ENCODE measurements at regions of chr6 and their contacts with region 1.

Region 1: GRCh38 chr6:42402184-42402583 is 49.5 kb downstream of the TRERF1 start:
- DNase-seq: peak; percentile 82
- H3K4me3 Mint-ChIP-seq: peak overlapping the region; percentile 70
- H3K27ac Mint-ChIP-seq: peak overlapping the region; percentile 74
- H3K4me1 Mint-ChIP-seq: peaks cover 63% of the 10 kb centered on the region
- H3K27me3 Mint-ChIP-seq: no peaks in the 10 kb centered on the region
- CTCF ChIP-seq: no peak

Region 2: GRCh38 chr6:42197555-42198362 is 204.4 kb before region 1 on chr6:
- CTCF ChIA-PET with region 1: no interaction called
- POLR2A ChIA-PET with region 1: no interaction called
- intact Hi-C with region 1: no loop called
- DNase-seq: peak; percentile 54
- H3K4me3 Mint-ChIP-seq: no peak overlapping the region
- H3K27ac Mint-ChIP-seq: no peak overlapping the region
- H3K4me1 Mint-ChIP-seq: peaks cover 27% of the 10 kb centered on the region
- H3K27me3 Mint-ChIP-seq: no peaks in the 10 kb centered on the region
- CTCF ChIP-seq: no peak

Region 3: GRCh38 chr6:42210551-42210950 is 191.6 kb before region 1 on chr6:
- CTCF ChIA-PET with region 1: no interaction called
- POLR2A ChIA-PET with region 1: interaction called, 11 read pairs
- intact Hi-C with region 1: no loop called
- DNase-seq: peak; percentile 43
- H3K4me3 Mint-ChIP-seq: no peak overlapping the region
- H3K27ac Mint-ChIP-seq: peak overlapping the region; percentile 63
- H3K4me1 Mint-ChIP-seq: no peaks in the 10 kb centered on the region
- H3K27me3 Mint-ChIP-seq: no peaks in the 10 kb centered on the region
- CTCF ChIP-seq: no peak

Region 4: DNA sequence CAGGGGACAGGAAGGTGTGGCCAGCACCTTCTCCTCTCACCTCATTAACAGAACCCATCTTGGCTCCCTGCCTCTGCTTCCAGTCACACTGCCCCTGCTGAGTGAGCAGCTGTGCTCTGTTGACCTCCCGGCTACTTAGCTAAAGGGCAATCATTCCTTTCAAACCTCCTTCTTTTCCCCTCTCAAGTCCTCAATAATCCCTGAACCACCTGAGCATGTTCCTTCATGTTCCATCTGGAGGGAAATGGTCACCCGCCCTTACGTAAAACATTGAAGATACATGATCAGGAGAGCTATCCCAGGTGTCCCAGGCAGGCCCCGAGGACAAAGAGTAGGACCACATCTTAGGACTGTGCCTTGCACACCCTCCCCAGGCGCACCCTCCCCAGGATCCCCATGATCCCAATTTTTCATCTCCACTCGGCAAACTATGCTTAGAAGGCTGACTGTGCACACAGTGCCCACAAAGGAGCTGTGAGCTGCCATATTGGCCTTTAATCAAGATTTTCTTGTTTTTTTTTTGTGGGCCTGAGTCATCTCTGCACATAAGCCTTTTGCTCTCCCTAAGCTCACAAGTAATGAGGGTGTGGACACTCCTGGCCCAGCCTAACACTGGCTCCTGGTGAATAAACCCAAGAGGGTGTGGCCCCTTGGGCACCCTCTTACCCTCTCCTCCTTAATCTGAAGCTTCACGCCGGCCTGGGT is 162.7 kb before region 1 on chr6:
- CTCF ChIA-PET with region 1: no interaction called
- POLR2A ChIA-PET with region 1: interaction called, 11 read pairs
- intact Hi-C with region 1: no loop called
- DNase-seq: peak; percentile 85
- H3K4me3 Mint-ChIP-seq: peak overlapping the region; percentile 24
- H3K27ac Mint-ChIP-seq: peak overlapping the region; percentile 89
- H3K4me1 Mint-ChIP-seq: peaks cover 23% of the 10 kb centered on the region
- H3K27me3 Mint-ChIP-seq: no peaks in the 10 kb centered on the region
- CTCF ChIP-seq: no peak

Region 5: GRCh38 chr6:42294759-42295158 is 107.4 kb before region 1 on chr6:
- CTCF ChIA-PET with region 1: interaction called, 6 read pairs
- POLR2A ChIA-PET with region 1: interaction called, 11 read pairs
- intact Hi-C with region 1: no loop called
- DNase-seq: peak; percentile 96
- H3K4me3 Mint-ChIP-seq: peak overlapping the region; percentile 15
- H3K27ac Mint-ChIP-seq: peak overlapping the region; percentile 93
- H3K4me1 Mint-ChIP-seq: peaks cover 38% of the 10 kb centered on the region
- H3K27me3 Mint-ChIP-seq: no peaks in the 10 kb centered on the region
- CTCF ChIP-seq: no peak

Region 6: DNA sequence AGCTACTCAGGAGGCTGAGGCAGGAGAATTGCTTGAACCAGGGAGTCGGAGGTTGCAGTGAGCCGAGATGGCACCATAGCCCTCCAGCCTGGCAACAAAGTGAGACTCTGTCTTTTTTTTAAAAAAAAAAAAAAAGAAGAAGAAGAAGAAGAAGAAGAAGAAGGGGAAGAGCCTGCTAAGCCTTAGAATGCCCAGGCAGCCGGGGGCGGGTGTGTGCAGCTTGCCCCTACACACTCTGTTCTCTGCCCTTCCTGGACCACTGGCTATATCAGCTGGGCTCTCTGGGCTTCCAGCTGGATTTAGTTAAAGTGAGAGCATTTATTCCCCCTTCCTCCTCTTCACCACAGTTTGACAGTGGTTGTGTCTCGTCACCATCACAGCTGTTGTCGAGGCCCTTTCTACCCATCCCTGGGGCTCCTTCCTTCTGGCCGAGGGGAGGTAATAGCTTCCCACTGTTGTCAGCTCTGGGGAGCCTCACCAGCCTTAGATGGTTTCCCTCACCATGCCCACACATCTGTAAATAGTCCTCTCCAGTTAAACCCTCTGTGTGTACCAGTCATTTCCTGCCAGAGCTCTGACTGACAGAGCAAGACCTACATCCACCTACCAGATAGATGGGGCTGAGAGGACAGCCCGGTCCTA is 28.0 kb before region 1 on chr6:
- CTCF ChIA-PET with region 1: no interaction called
- POLR2A ChIA-PET with region 1: interaction called, 38 read pairs
- intact Hi-C with region 1: no loop called
- DNase-seq: peak; percentile 11
- H3K4me3 Mint-ChIP-seq: no peak overlapping the region
- H3K27ac Mint-ChIP-seq: peak overlapping the region; percentile 55
- H3K4me1 Mint-ChIP-seq: peaks cover 31% of the 10 kb centered on the region
- H3K27me3 Mint-ChIP-seq: no peaks in the 10 kb centered on the region
- CTCF ChIP-seq: no peak

Region 7: GRCh38 chr6:42453031-42453653 is 51.0 kb after region 1 on chr6:
- CTCF ChIA-PET with region 1: interaction called, 17 read pairs
- POLR2A ChIA-PET with region 1: interaction called, 227 read pairs
- intact Hi-C with region 1: loop called (anchors 1 kb)
- DNase-seq: peak; percentile 87
- H3K4me3 Mint-ChIP-seq: peak overlapping the region; percentile 91
- H3K27ac Mint-ChIP-seq: no peak overlapping the region
- H3K4me1 Mint-ChIP-seq: peaks cover 32% of the 10 kb centered on the region
- H3K27me3 Mint-ChIP-seq: no peaks in the 10 kb centered on the region
- CTCF ChIP-seq: no peak

Region 8: GRCh38 chr6:42563697-42564505 is 161.7 kb after region 1 on chr6 and contains the start of gene UBR2:
- CTCF ChIA-PET with region 1: interaction called, 4 read pairs
- POLR2A ChIA-PET with region 1: interaction called, 40 read pairs
- intact Hi-C with region 1: no loop called
- DNase-seq: peak; percentile 99
- H3K4me3 Mint-ChIP-seq: peak within 1 kb of the TSS; percentile 79
- H3K27ac Mint-ChIP-seq: peak within 1 kb of the TSS; percentile 81
- H3K4me1 Mint-ChIP-seq: peaks cover 18% of the 10 kb centered on the region
- H3K27me3 Mint-ChIP-seq: no peaks in the 10 kb centered on the region
- CTCF ChIP-seq: no peak
- total RNA-seq, gene UBR2: 20.1 and 23.2 TPM in 2 replicates